ENCODE measurements at regions of chr7 and their contacts with region 1.

Region 1: DNA sequence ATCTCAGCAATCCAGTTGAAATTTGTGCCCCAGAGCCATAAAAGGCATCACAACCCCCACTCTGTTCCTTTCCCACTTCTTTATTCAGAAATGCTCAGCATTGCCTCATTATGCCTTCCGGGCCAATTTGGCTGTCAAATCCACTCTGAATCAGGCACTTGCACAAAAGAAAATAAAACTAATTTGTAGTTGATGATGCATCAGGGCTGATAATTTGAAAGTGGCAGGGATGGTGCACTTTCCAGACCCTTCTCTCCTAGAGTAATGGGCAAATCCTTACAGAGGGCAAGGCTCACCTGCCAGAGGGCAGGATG is 147.9 kb upstream of the PDE1C start:
- DNase-seq: no peak
- ATAC-seq: no peak
- H3K4me3 ChIP-seq: no peak overlapping the region
- H3K27ac ChIP-seq: no peak overlapping the region
- H3K4me1 ChIP-seq: no peaks in the 10 kb centered on the region
- H3K27me3 ChIP-seq: no peaks in the 10 kb centered on the region
- CTCF ChIP-seq: no peak
- EP300 ChIP-seq: no peak
- POLR2A ChIP-seq: no peak
- RAD21 ChIP-seq: no peak

Region 2: DNA sequence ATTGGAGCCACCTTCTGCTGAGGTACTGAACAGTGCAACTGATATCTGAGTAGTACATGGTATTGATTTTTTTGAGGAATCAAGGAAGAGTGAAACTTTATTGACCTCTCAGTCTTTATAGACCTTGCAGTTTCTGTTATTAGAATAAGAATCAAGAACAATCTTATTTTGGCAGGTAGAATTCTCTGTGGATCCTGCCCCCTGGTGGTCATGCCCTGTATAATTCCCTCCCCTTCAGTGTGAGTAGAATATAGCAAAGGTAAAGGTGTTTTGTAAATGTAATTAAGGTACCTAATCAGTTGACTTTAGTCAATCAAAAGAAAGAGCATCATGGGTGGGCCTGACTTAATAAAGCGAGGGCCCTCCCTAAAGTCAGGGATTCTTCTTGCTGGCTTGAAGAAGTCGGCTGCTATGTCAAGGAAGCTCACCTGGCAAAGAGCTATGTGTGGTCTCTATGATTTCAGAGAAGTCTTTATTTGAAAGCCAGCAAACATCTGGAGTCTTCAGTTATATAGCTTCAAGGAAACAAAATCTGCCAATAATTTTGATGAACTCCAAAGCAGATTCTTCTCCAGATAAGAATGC is 129.2 kb after region 1 on chr7:
- CTCF ChIA-PET with region 1: no interaction called
- POLR2A ChIA-PET with region 1: no interaction called
- in situ Hi-C with region 1: loop called (anchors 10 kb)
- intact Hi-C with region 1: no loop called
- DNase-seq: peak; percentile 5
- ATAC-seq: no peak
- H3K4me3 ChIP-seq: no peak overlapping the region
- H3K27ac ChIP-seq: no peak overlapping the region
- H3K4me1 ChIP-seq: no peaks in the 10 kb centered on the region
- H3K27me3 ChIP-seq: no peaks in the 10 kb centered on the region
- CTCF ChIP-seq: peak; percentile 51
- EP300 ChIP-seq: no peak
- POLR2A ChIP-seq: no peak
- RAD21 ChIP-seq: no peak

Region 3: GRCh38 chr7:32479574-32480200 is 261.6 kb after region 1 on chr7:
- CTCF ChIA-PET with region 1: no interaction called
- POLR2A ChIA-PET with region 1: no interaction called
- in situ Hi-C with region 1: loop called (anchors 10 kb)
- intact Hi-C with region 1: no loop called
- DNase-seq: peak; percentile 54
- ATAC-seq: peak; percentile 49; the same call in 2 of the 3 replicates
- H3K4me3 ChIP-seq: no peak overlapping the region
- H3K27ac ChIP-seq: no peak overlapping the region
- H3K4me1 ChIP-seq: no peaks in the 10 kb centered on the region
- H3K27me3 ChIP-seq: no peaks in the 10 kb centered on the region
- CTCF ChIP-seq: peak; percentile 85
- EP300 ChIP-seq: no peak
- POLR2A ChIP-seq: no peak
- RAD21 ChIP-seq: peak; percentile 62

Region 4: DNA sequence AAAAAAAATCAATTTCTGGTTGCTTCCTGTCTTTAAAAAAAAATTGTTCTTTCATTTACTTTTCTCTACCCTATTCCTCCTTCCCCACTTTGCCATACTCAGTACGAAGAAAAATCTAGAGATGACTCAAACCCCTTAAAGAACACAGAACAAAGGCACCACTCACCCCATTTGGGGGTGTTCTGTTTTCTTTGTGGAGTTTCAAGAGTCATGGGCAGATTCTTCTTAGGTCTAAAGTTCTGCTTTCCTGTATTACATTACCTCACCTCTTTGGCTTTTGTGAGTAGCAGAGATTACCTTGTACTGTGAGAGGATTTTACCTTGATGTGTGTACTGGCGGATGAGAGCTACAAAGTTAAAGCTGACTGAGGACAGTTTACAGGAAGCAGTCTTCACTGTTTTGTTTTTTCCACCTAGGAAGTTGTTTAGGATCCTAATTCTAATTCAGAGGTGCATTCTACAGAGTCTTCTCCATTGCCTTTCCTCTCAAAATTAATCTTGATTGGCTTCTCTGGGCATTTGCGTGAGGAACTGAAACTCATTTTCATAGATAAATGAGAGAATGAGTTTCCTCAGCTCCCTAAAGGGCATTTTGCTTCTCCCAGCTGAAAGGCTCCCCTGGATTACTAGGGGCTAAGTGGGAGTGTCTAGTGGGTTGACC is 297.9 kb after region 1 on chr7:
- CTCF ChIA-PET with region 1: no interaction called
- POLR2A ChIA-PET with region 1: no interaction called
- in situ Hi-C with region 1: no loop called
- intact Hi-C with region 1: no loop called
- DNase-seq: peak; percentile 92
- ATAC-seq: peak; percentile 97
- H3K4me3 ChIP-seq: peak overlapping the region in 1 of 3 experiments; percentile 18; a peak in 1 of 6 replicates
- H3K27ac ChIP-seq: peak overlapping the region; percentile 79
- H3K4me1 ChIP-seq: peaks cover 56% of the 10 kb centered on the region
- H3K27me3 ChIP-seq: no peaks in the 10 kb centered on the region
- CTCF ChIP-seq: no peak
- EP300 ChIP-seq: peak in 1 of 2 experiments; percentile 52; a peak in 1 of 4 replicates
- POLR2A ChIP-seq: no peak
- RAD21 ChIP-seq: no peak